MCF 10A (cell line): ENCODE measurements at regions of chr1 and their contacts with region 1.

Region 1: DNA sequence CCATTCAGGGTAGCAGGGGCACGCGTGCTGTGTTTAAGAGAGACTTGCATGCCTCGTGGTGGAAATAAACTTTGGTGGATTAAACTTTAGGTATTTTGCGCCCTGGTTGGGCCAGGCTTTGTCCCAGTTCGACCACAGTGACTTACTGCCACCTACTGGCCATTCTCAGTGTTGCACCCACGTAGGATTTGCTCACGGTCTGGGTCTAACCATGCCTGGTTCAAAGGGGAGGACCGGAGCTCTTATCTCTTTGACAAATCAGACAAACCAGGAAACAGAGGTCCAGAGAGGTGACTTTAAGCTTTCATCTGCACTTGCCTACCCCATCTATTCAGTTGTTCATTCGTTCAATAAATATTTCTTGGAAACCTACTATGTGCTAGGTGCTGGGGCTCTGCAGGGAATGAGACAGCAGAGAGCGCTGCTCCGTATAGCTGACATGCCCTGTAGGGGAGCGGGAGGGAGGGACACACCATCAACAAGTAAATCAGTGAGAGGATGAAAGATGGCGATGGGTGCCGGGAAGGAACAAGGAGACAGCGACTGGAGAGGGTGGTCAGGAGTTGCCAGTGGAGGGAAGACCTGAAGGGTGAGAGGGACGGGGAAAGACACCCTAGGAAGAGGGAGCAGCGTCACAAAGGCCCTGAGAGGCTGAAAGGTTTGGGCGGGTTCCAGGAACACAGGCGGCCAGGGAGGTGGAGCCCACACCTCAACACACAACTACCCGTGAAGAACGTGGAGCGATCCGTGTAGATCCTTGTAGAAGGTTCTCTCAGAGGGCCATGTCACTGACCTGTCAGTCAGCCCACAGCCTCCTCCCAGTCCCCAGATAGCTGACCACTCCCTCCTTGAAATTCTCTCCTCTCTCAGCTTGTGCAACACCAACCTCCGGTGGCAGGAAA is 27.2 kb upstream of the TINAGL1 start:
- DNase-seq: peak; percentile 91
- H3K4me3 Mint-ChIP-seq: peak overlapping the region; percentile 73
- H3K27ac Mint-ChIP-seq: peak overlapping the region; percentile 33
- H3K4me1 Mint-ChIP-seq: peaks cover 11% of the 10 kb centered on the region
- H3K27me3 Mint-ChIP-seq: no peaks in the 10 kb centered on the region
- CTCF ChIP-seq: peak; percentile 71

Region 2: DNA sequence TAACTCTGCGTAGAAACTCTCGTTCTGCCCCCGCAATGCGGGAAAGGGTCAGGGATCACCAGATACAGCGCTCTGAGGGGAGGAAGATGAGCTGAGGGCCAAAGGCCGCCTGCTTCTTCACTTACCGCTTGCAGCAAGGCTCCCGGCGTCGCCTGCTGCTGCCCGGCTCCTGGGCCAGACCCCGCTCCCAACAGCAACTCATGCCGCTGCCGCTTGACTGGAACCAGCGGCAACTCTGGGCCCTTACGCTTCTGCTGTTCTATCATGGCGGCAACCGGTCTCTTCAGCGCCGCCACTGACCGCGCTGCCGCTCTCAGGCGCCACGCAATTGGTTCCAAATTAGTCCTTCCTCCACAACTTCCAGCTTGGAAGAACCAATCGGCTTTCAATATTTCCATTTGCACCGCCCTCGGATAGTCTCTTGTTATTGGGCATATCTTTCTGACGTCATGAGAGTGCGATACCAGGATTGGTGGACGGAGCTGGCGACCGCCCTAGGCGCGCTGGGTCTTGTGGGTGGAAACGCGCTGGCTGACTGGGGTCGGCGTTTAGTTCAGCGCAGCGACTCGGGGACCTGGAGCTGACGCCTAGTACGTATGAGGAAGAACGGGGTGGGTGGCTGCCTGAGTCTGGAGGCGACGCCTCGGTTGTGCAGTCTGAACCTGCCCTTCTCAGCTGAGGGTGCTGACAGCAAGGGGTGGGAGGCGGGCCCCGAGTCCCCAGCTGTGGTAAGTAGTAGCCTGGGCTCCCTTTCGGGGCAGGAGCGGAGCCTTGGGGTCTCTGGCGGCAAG is 252.5 kb before region 1 on chr1 and contains the starts of genes SNRNP40 and ZCCHC17:
- CTCF ChIA-PET with region 1: no interaction called
- POLR2A ChIA-PET with region 1: interaction called, 14 read pairs
- intact Hi-C with region 1: no loop called
- DNase-seq: peak; percentile 99
- H3K4me3 Mint-ChIP-seq: no peak within 1 kb of the TSS
- H3K27ac Mint-ChIP-seq: no peak within 1 kb of the TSS
- H3K4me1 Mint-ChIP-seq: peaks cover 28% of the 10 kb centered on the region
- H3K27me3 Mint-ChIP-seq: no peaks in the 10 kb centered on the region
- CTCF ChIP-seq: no peak
- total RNA-seq, gene SNRNP40: 65.4 and 72.8 TPM in 2 replicates
- total RNA-seq, gene ZCCHC17: 29.3 and 40.0 TPM in 2 replicates

Region 3: GRCh38 chr1:31394628-31395193 is 154.4 kb before region 1 on chr1:
- CTCF ChIA-PET with region 1: interaction called, 90 read pairs
- POLR2A ChIA-PET with region 1: interaction called, 33 read pairs
- intact Hi-C with region 1: loop called (anchors 1 kb)
- DNase-seq: peak; percentile 90
- H3K4me3 Mint-ChIP-seq: peak overlapping the region; percentile 40
- H3K27ac Mint-ChIP-seq: no peak overlapping the region
- H3K4me1 Mint-ChIP-seq: peaks cover 19% of the 10 kb centered on the region
- H3K27me3 Mint-ChIP-seq: no peaks in the 10 kb centered on the region
- CTCF ChIP-seq: peak; percentile 83

Region 4: GRCh38 chr1:31422505-31423319 is 126.4 kb before region 1 on chr1:
- CTCF ChIA-PET with region 1: interaction called, 33 read pairs
- POLR2A ChIA-PET with region 1: interaction called, 8 read pairs
- intact Hi-C with region 1: loop called (anchors 1 kb)
- DNase-seq: peak; percentile 91
- H3K4me3 Mint-ChIP-seq: peak overlapping the region; percentile 30
- H3K27ac Mint-ChIP-seq: peak overlapping the region; percentile 94
- H3K4me1 Mint-ChIP-seq: peaks cover 29% of the 10 kb centered on the region
- H3K27me3 Mint-ChIP-seq: no peaks in the 10 kb centered on the region
- CTCF ChIP-seq: peak; percentile 95

Region 5: GRCh38 chr1:31441970-31442647 is 107.0 kb before region 1 on chr1:
- CTCF ChIA-PET with region 1: interaction called, 12 read pairs
- POLR2A ChIA-PET with region 1: no interaction called
- intact Hi-C with region 1: no loop called
- DNase-seq: no peak
- H3K4me3 Mint-ChIP-seq: no peak overlapping the region
- H3K27ac Mint-ChIP-seq: no peak overlapping the region
- H3K4me1 Mint-ChIP-seq: no peaks in the 10 kb centered on the region
- H3K27me3 Mint-ChIP-seq: no peaks in the 10 kb centered on the region
- CTCF ChIP-seq: no peak

Region 6: DNA sequence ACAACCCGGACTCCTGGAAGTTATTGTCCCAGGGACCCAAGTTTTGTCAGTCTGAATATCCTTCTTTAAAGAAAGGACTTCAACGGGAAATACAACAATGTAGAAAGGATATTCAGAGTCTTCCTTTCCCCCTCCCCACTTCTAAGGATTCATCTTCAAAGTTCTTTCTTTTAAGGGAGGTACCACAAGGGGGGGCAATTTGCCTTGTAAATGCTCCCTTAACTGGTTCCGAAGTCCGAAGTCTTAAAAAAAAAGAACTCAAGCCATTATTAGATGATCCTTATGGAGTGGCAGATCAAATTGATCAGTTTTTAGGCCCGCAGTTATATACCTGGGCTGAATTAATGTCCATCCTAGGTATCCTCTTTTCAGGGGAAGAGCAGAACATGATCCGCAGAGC is 89.1 kb before region 1 on chr1:
- CTCF ChIA-PET with region 1: interaction called, 9 read pairs
- POLR2A ChIA-PET with region 1: interaction called, 4 read pairs
- intact Hi-C with region 1: loop called (anchors 1 kb)
- DNase-seq: no peak
- H3K4me3 Mint-ChIP-seq: no peak overlapping the region
- H3K27ac Mint-ChIP-seq: no peak overlapping the region
- H3K4me1 Mint-ChIP-seq: no peaks in the 10 kb centered on the region
- H3K27me3 Mint-ChIP-seq: peaks cover 20% of the 10 kb centered on the region
- CTCF ChIP-seq: peak; percentile 45

Region 7: DNA sequence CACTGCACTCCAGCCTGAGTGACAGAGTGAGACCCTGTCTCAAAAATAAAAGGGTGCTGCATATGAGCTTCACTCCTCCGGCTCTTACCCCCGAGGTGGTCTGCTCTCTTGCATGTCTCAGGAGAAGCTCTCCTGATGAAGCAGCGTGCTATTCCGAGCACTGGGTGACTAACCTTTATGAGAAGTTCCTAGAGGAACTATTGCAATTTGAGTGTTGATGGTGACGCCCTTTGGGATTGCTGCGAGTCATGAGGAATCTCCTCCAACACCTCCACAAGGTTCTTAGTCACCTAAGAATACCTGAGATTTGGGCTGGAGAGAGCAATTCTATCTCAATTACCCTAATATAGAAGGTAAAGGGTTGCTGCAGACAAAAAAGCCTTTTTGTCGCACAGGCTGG is 13.6 kb before region 1 on chr1:
- CTCF ChIA-PET with region 1: interaction called, 16 read pairs
- POLR2A ChIA-PET with region 1: interaction called, 4 read pairs
- intact Hi-C with region 1: no loop called
- DNase-seq: peak; percentile 14
- H3K4me3 Mint-ChIP-seq: no peak overlapping the region
- H3K27ac Mint-ChIP-seq: no peak overlapping the region
- H3K4me1 Mint-ChIP-seq: peaks cover 10% of the 10 kb centered on the region
- H3K27me3 Mint-ChIP-seq: no peaks in the 10 kb centered on the region
- CTCF ChIP-seq: no peak